Stomach (tissue), 19 donors: ENCODE measurements at regions of chr19 and their contacts with region 1.

Region 1: GRCh38 chr19:56594783-56595547 is at the start of gene ZNF71:
- DNase-seq: peak; percentile 91 to 97
- H3K4me3 ChIP-seq: peak within 1 kb of the TSS; percentile 94 to 97 (median 97)
- H3K27ac ChIP-seq: peak within 1 kb of the TSS; percentile 49 to 84 (median 73)
- H3K4me1 ChIP-seq: peaks cover 0 to 22% (median 15%) of the 10 kb centered on the region in 4 donors
- H3K27me3 ChIP-seq: no peaks in the 10 kb centered on the region
- CTCF ChIP-seq: no peak
- EP300 ChIP-seq: no peak
- POLR2A ChIP-seq: no peak
- total RNA-seq, gene ZNF71: 6.6 to 18.2 (median 11.0) TPM in 4 of 5 donors, not detected in the other

Region 2: GRCh38 chr19:56403764-56404704 is 190.9 kb before region 1 on chr19 and contains the start of gene ZNF583:
- intact Hi-C with region 1: loop called (anchors 10 kb)
- DNase-seq: peak; percentile 95 to 99
- H3K4me3 ChIP-seq: peak within 1 kb of the TSS; percentile 70 to 85 (median 78)
- H3K27ac ChIP-seq: peak within 1 kb of the TSS; percentile 84 to 97 (median 94)
- H3K4me1 ChIP-seq: peaks cover 6 to 24% (median 20%) of the 10 kb centered on the region in 4 donors
- H3K27me3 ChIP-seq: no peaks in the 10 kb centered on the region
- CTCF ChIP-seq: peak in 1 of 7 experiments; percentile 8
- EP300 ChIP-seq: no peak
- POLR2A ChIP-seq: no peak
- total RNA-seq, gene ZNF583: 0.45 to 13.0 (median 5.7) TPM in 4 of 5 donors, not detected in the other